Thyroid gland (tissue), 4 donors: ENCODE measurements at regions of chr18 and their contacts with region 1.

Region 1: DNA sequence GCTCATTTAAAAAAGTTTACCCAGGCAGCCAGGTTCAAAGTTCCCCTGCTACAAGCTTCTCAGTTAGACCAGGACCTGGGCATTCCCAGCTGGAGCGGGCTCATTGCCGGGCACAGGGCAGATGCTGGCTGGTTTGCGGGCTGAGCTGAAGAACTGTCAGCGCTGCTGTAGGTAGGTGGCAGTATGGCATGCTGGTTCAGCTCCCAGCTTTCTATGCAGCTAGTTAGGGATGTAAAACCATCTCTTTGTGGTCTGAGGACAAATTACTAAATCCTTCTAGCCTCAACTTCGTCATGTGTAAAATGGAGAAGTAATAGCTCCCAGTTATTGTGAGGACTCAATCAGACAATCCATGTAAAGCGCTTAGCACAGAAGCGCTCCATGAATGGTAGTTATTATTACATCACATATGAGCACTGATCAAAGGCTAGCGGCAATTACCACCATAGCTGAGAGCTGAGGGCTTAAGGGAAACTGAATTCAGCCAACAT is 2.4 kb upstream of the LDLRAD4 start:
- DNase-seq: peak; percentile 78 to 79
- H3K4me3 ChIP-seq: no peak overlapping the region
- H3K27ac ChIP-seq: no peak overlapping the region
- H3K4me1 ChIP-seq: peaks cover 28 to 38% of the 10 kb centered on the region in 2 donors
- H3K27me3 ChIP-seq: no peaks in the 10 kb centered on the region
- CTCF ChIP-seq: peak in 5 of 6 experiments; percentile 36 to 84 (median 73)
- POLR2A ChIP-seq: no peak

Region 2: DNA sequence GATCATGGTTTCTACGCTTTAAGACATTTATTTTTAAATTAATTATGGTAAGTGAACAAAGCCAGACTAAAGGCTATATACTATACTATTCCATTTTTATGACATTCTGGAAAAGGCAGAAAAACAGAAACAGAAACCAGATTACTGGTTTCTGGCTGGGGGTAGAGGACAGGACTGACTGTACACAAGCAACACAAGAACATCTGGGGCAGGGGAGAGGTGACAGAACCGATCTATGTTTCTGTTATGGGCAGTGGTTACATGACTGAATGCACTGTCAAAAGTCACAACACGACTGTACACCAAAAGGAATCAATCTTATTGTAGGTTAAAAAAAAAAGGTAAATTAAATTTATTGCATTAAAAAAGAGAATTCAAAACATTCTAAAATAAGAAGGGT is 396.8 kb before region 1 on chr18:
- intact Hi-C with region 1: no loop called
- DNase-seq: no peak
- H3K4me3 ChIP-seq: no peak overlapping the region
- H3K27ac ChIP-seq: no peak overlapping the region
- H3K4me1 ChIP-seq: no peaks in the 10 kb centered on the region
- H3K27me3 ChIP-seq: no peaks in the 10 kb centered on the region
- CTCF ChIP-seq: no peak
- POLR2A ChIP-seq: no peak

Region 3: GRCh38 chr18:13324870-13325269 is 108.7 kb after region 1 on chr18:
- intact Hi-C with region 1: no loop called
- DNase-seq: no peak
- H3K4me3 ChIP-seq: no peak overlapping the region
- H3K27ac ChIP-seq: no peak overlapping the region
- H3K4me1 ChIP-seq: no peaks in the 10 kb centered on the region
- H3K27me3 ChIP-seq: no peaks in the 10 kb centered on the region
- CTCF ChIP-seq: no peak
- POLR2A ChIP-seq: no peak

Region 4: DNA sequence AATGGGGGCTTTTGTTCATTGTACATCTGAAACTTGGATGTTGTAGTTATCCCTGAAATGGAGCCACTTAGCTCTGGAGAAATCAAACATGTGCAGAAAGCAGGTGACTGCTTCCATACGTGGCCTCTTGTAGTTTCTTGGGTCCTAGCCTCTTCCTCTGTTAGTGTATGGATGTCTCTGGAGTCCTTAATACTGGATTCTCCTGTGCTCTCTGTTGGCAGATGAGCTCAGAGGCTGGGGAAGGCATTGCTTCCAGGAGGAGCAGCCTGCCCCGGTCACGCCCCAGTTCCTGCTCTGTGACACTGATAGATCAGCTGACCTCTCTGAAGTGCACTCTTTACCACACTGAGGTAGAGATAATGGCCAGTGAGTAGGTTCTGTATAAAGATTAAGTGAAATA is 178.7 kb after region 1 on chr18:
- intact Hi-C with region 1: loop called (anchors 5 kb)
- DNase-seq: peak; percentile 70 to 76
- H3K4me3 ChIP-seq: no peak overlapping the region
- H3K27ac ChIP-seq: no peak overlapping the region
- H3K4me1 ChIP-seq: peaks cover 5 to 36% of the 10 kb centered on the region in 2 donors
- H3K27me3 ChIP-seq: no peaks in the 10 kb centered on the region
- CTCF ChIP-seq: peak in 1 of 6 experiments; percentile 22
- POLR2A ChIP-seq: no peak

Region 5: GRCh38 chr18:13530879-13531387 is 314.8 kb after region 1 on chr18:
- intact Hi-C with region 1: loop called (anchors 10 kb)
- DNase-seq: peak; percentile 67
- H3K4me3 ChIP-seq: no peak overlapping the region
- H3K27ac ChIP-seq: no peak overlapping the region
- H3K4me1 ChIP-seq: peaks cover 0 to 6% of the 10 kb centered on the region in 2 donors
- H3K27me3 ChIP-seq: no peaks in the 10 kb centered on the region
- CTCF ChIP-seq: peak in 5 of 6 experiments; percentile 49 to 59 (median 52)
- POLR2A ChIP-seq: no peak

Region 6: GRCh38 chr18:13629841-13630715 is 413.9 kb after region 1 on chr18:
- intact Hi-C with region 1: loop called (anchors 5 kb)
- DNase-seq: peak; percentile 58 to 69
- H3K4me3 ChIP-seq: no peak overlapping the region
- H3K27ac ChIP-seq: peak overlapping the region in 2 of 3 donors; percentile 47 to 70
- H3K4me1 ChIP-seq: peaks cover 5 to 7% of the 10 kb centered on the region in 2 donors
- H3K27me3 ChIP-seq: no peaks in the 10 kb centered on the region
- CTCF ChIP-seq: peak; percentile 51 to 97 (median 80)
- POLR2A ChIP-seq: no peak

Region 7: DNA sequence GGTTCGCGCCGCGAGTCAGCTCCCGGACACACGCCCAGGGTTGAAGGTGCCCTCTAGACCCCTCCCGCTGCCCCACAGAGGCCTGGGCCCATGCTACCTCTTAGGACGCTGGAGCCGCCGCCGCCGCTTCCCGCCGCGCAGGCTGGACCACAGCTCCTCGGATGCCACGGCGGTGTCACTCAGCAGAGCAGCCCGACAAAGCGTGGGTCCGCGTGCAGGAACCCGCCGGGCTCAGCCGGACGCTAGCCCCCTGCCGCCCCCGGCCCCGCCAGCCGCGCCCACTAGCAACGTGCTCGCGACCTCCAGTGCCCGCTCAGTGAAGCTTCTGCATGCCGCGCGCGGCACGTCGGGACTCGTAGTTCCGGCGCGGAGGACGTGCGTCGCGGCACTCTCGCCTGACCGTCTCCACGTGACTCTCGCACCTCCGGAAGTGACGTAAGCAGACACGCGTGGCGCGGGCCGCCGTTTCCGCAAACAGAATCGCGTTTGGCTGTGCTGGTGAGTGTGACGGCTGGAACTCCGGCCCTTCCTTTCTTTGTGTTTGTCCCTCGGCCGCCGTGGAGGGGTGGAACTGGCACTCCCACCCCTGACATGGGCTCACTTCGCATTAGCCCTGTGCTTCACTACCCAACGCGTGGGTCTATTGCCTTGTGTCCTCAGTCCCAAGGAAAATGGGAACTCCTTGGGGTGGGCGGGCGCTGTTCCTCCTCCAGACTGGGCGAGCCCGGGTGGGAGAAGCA is 510.3 kb after region 1 on chr18 and contains the starts of genes FAM210A and RNMT:
- intact Hi-C with region 1: loop called (anchors 10 kb)
- DNase-seq: peak; percentile 95 to 97
- H3K4me3 ChIP-seq: peak within 1 kb of the TSS; percentile 81 to 98 (median 86)
- H3K27ac ChIP-seq: peak within 1 kb of the TSS; percentile 74 to 94 (median 87)
- H3K4me1 ChIP-seq: peaks cover 11 to 12% of the 10 kb centered on the region in 2 donors
- H3K27me3 ChIP-seq: no peaks in the 10 kb centered on the region
- CTCF ChIP-seq: peak in 2 of 6 experiments; percentile 6 to 34
- POLR2A ChIP-seq: peak; percentile 16 to 81
- total RNA-seq, gene FAM210A: 9.1 to 13.8 (median 12.1) TPM
- total RNA-seq, gene RNMT: 26.7 to 45.9 (median 34.0) TPM